OCI-LY7 (cell line): ENCODE measurements at regions of chr6 and their contacts with region 1.

Region 1: GRCh38 chr6:167056370-167056769 is 57.2 kb downstream of the CEP43 start:
- DNase-seq: peak; percentile 21
- H3K4me3 ChIP-seq: no peak overlapping the region
- H3K27ac ChIP-seq: no peak overlapping the region
- H3K4me1 ChIP-seq: peaks cover 20% of the 10 kb centered on the region
- CTCF ChIP-seq: no peak

Region 2: DNA sequence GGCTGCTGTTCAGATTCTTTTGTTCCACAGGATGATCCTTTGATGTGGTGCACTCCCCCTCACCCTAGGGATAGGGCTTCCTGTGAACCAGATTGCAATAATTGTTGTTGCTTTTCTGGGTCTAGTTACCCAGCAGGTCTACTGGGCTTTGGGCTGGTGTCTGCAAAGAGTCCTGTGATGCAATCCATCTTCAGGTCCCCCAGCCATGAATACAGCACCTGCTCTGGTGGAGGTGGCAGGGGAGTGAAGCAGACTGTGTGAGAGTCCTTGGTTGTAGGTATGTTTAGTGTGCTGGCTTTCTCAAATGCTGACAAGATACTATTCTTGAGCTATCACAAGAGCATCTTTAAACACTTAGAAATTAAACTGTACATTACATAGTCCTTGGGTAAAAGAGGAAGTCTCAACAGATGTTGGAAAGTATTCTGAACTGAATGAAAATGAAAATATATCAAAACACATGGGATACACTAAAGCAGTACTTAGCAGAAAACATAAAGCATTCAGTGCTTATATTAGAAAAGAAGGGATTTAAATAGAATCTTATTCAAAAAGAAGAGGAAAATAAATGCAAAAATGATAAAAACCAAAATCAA is 17.4 kb after region 1 on chr6:
- CTCF ChIA-PET with region 1: no interaction called
- POLR2A ChIA-PET with region 1: interaction called, 11 read pairs
- intact Hi-C with region 1: no loop called
- DNase-seq: peak; percentile 67
- H3K4me3 ChIP-seq: no peak overlapping the region
- H3K27ac ChIP-seq: peak overlapping the region; percentile 66
- H3K4me1 ChIP-seq: peaks cover 45% of the 10 kb centered on the region
- CTCF ChIP-seq: no peak